ENCODE measurements at regions of chr4 and their contacts with region 1.

Region 1: DNA sequence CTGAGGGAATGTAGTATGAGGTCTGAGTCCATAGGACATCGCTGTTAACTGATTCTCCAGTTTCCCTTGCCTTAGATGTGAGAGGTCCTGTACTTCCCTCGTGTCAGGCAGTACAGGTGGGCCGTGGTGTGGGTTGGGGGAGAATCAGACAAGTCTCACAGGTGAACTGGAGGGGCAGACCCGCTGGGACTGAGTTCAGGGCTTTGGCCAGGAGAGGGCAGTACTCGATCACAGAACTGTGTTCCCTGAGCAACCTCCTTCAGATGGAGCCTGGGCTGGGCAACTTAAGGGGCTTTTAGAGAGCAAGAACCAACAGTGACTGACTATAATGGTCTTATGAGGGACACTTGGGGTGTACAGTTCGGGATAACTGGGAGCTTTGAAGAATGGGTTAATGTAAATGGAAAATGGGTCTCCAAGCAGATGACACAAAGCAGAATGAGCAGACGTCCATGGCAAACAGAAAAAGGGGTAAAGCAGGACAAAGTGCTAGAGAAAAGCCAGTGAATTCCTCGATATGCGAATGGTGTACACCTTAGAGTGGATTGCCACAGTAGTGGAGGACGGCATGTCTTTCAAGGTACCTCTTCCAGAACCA is 83.6 kb downstream of the CCNG2 start:
- DNase-seq: peak in 1 of 2 donors; percentile 69
- H3K4me3 ChIP-seq: no peak overlapping the region
- H3K27ac ChIP-seq: no peak overlapping the region
- H3K4me1 ChIP-seq: no peaks in the 10 kb centered on the region
- H3K27me3 ChIP-seq: no peaks in the 10 kb centered on the region
- CTCF ChIP-seq: peak in 2 of 3 experiments; percentile 41 to 49

Region 2: GRCh38 chr4:77358315-77358928 is 117.9 kb after region 1 on chr4:
- intact Hi-C with region 1: loop called (anchors 2 kb)
- DNase-seq: no peak
- H3K4me3 ChIP-seq: no peak overlapping the region
- H3K27ac ChIP-seq: no peak overlapping the region
- H3K4me1 ChIP-seq: no peaks in the 10 kb centered on the region
- H3K27me3 ChIP-seq: no peaks in the 10 kb centered on the region
- CTCF ChIP-seq: peak in 2 of 3 experiments; percentile 42 to 52

Region 3: DNA sequence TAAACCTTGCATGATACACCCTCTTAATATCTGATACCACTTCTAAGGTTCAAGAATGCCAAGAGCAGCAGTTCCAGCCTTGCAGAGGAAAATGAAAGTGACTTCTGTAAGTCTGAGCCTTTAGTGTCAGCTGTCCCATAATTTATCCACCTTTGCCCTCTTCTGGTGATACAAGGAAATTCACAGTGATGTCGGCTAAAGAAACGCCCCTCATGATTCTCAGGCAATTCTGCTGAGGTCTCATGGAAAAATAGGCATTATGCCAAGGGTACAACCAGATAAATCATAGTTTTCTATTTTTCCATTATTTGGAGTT is 192.8 kb after region 1 on chr4:
- intact Hi-C with region 1: loop called (anchors 5 kb)
- DNase-seq: no peak
- H3K4me3 ChIP-seq: peak overlapping the region in 1 of 2 donors; percentile 26
- H3K27ac ChIP-seq: peak overlapping the region; percentile 60 to 62
- H3K4me1 ChIP-seq: peaks cover 0 to 14% of the 10 kb centered on the region in 2 donors
- H3K27me3 ChIP-seq: no peaks in the 10 kb centered on the region
- CTCF ChIP-seq: peak; percentile 35 to 57 (median 49)

Region 4: GRCh38 chr4:77618383-77619122 is 378.0 kb after region 1 on chr4:
- intact Hi-C with region 1: no loop called
- DNase-seq: peak in 1 of 2 donors; percentile 79
- H3K4me3 ChIP-seq: peak overlapping the region in 1 of 2 donors; percentile 5
- H3K27ac ChIP-seq: no peak overlapping the region
- H3K4me1 ChIP-seq: peaks cover 0 to 3% of the 10 kb centered on the region in 2 donors
- H3K27me3 ChIP-seq: no peaks in the 10 kb centered on the region
- CTCF ChIP-seq: peak; percentile 41 to 87 (median 67)